B cell (primary cell): ENCODE measurements at regions of chr13 and their contacts with region 1.

Region 1: GRCh38 chr13:40613192-40613818 is 53.1 kb downstream of the FOXO1 start:
- DNase-seq: peak; percentile 78
- ATAC-seq: peak; percentile 83
- H3K4me3 ChIP-seq: peak overlapping the region in 3 of 5 experiments; percentile 3 to 36 (median 25)
- H3K4me3 Mint-ChIP-seq: peak overlapping the region; percentile 71
- H3K27ac ChIP-seq: peak overlapping the region; percentile 55 to 83
- H3K27ac Mint-ChIP-seq: peak overlapping the region; percentile 88
- H3K4me1 ChIP-seq: peaks cover 71 to 89% of the 10 kb centered on the region in 2 donors
- H3K4me1 Mint-ChIP-seq: peaks cover 88% of the 10 kb centered on the region
- H3K27me3 ChIP-seq: no peaks in the 10 kb centered on the region
- H3K27me3 Mint-ChIP-seq: no peaks in the 10 kb centered on the region
- CTCF ChIP-seq: no peak

Region 2: DNA sequence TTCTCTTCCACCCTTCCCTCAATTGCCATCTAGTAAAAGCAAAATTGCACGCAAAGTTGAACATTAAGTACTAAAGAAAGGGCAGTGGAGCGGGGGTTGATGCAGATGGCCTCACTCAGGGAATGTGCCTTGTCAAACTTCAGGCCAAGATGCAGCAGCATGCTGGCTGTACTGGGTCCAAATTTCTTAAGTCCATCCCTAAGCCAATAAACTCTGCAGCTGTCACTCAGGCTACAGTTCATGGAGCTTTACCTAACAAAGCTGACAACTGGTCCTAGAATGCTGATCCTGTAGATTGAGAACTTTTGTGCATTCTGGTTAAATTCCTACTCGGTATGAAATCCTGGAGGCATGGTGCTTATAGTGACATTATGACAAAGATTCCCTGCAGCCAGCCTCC is 35.2 kb before region 1 on chr13:
- CTCF ChIA-PET with region 1: no interaction called
- POLR2A ChIA-PET with region 1: interaction called, 6 read pairs
- intact Hi-C with region 1: loop called (anchors 5 kb)
- DNase-seq: no peak
- ATAC-seq: no peak
- H3K4me3 ChIP-seq: no peak overlapping the region
- H3K4me3 Mint-ChIP-seq: peak overlapping the region; percentile 42
- H3K27ac ChIP-seq: peak overlapping the region; percentile 77 to 83
- H3K27ac Mint-ChIP-seq: peak overlapping the region; percentile 77
- H3K4me1 ChIP-seq: peaks cover 93 to 94% of the 10 kb centered on the region in 2 donors
- H3K4me1 Mint-ChIP-seq: peaks cover 94% of the 10 kb centered on the region
- H3K27me3 ChIP-seq: no peaks in the 10 kb centered on the region
- H3K27me3 Mint-ChIP-seq: no peaks in the 10 kb centered on the region
- CTCF ChIP-seq: no peak

Region 3: GRCh38 chr13:40597740-40598370 is 15.4 kb before region 1 on chr13:
- CTCF ChIA-PET with region 1: no interaction called
- POLR2A ChIA-PET with region 1: no interaction called
- intact Hi-C with region 1: loop called (anchors 2 kb)
- DNase-seq: no peak
- ATAC-seq: no peak
- H3K4me3 ChIP-seq: no peak overlapping the region
- H3K4me3 Mint-ChIP-seq: peak overlapping the region; percentile 32
- H3K27ac ChIP-seq: peak overlapping the region; percentile 42 to 85
- H3K27ac Mint-ChIP-seq: peak overlapping the region; percentile 62
- H3K4me1 ChIP-seq: peaks cover 83 to 94% of the 10 kb centered on the region in 2 donors
- H3K4me1 Mint-ChIP-seq: peaks cover 88% of the 10 kb centered on the region
- H3K27me3 ChIP-seq: no peaks in the 10 kb centered on the region
- H3K27me3 Mint-ChIP-seq: no peaks in the 10 kb centered on the region
- CTCF ChIP-seq: no peak

Region 4: GRCh38 chr13:40629678-40630384 is 16.5 kb after region 1 on chr13:
- CTCF ChIA-PET with region 1: no interaction called
- POLR2A ChIA-PET with region 1: no interaction called
- intact Hi-C with region 1: loop called (anchors 2 kb)
- DNase-seq: peak; percentile 68
- ATAC-seq: peak; percentile 73
- H3K4me3 ChIP-seq: peak overlapping the region in 2 of 5 experiments; percentile 6 to 37
- H3K4me3 Mint-ChIP-seq: peak overlapping the region; percentile 66
- H3K27ac ChIP-seq: peak overlapping the region; percentile 74 to 80
- H3K27ac Mint-ChIP-seq: peak overlapping the region; percentile 80
- H3K4me1 ChIP-seq: peaks cover 69 to 76% of the 10 kb centered on the region in 2 donors
- H3K4me1 Mint-ChIP-seq: peaks cover 80% of the 10 kb centered on the region
- H3K27me3 ChIP-seq: no peaks in the 10 kb centered on the region
- H3K27me3 Mint-ChIP-seq: no peaks in the 10 kb centered on the region
- CTCF ChIP-seq: no peak

Region 5: DNA sequence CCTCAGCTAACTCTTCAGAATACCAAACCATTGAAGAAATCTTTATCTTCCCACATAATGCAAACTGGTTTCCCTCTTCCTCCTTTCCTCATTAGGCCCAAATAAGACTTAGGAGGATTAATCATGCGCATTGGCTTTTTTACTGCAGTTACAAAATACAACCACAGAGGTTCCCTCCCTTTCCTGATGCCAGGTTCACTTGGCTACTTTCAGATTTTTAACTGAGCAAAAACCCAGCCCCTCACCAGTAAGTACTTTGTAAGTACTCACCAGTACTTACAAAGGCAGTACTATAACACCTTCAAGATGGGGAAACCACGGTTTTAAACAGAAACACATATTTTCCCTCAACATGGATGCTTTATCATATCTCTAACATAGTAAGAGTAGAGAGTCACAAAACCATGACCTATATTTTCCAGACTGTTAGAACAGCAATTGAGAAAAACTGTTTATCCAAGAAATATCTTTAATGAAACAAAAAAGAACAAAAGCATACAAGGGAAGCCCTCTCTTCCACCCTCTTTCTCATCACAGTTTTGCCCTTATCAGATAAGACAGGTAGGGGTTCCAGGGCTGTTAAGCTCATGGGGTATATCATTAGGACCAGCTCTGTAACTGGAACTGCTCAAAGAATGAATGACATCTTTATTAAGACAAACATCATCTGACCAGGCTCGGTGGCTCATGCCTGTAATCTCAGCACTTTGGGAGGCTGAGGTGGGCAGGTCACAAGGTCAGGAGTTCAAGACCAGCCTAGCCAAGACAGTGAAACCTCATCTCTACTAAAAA is 40.4 kb after region 1 on chr13:
- CTCF ChIA-PET with region 1: no interaction called
- POLR2A ChIA-PET with region 1: interaction called, 5 read pairs
- intact Hi-C with region 1: loop called (anchors 5 kb)
- DNase-seq: no peak
- ATAC-seq: peak; percentile 11
- H3K4me3 ChIP-seq: peak overlapping the region in 2 of 5 experiments; percentile 51 to 58
- H3K4me3 Mint-ChIP-seq: peak overlapping the region; percentile 86
- H3K27ac ChIP-seq: peak overlapping the region; percentile 62 to 73
- H3K27ac Mint-ChIP-seq: peak overlapping the region; percentile 90
- H3K4me1 ChIP-seq: peaks cover 79 to 87% of the 10 kb centered on the region in 2 donors
- H3K4me1 Mint-ChIP-seq: peaks cover 92% of the 10 kb centered on the region
- H3K27me3 ChIP-seq: no peaks in the 10 kb centered on the region
- H3K27me3 Mint-ChIP-seq: no peaks in the 10 kb centered on the region
- CTCF ChIP-seq: no peak

Region 6: GRCh38 chr13:40749327-40749726 is 136.0 kb after region 1 on chr13:
- CTCF ChIA-PET with region 1: no interaction called
- POLR2A ChIA-PET with region 1: no interaction called
- intact Hi-C with region 1: no loop called
- DNase-seq: no peak
- ATAC-seq: no peak
- H3K4me3 ChIP-seq: no peak overlapping the region
- H3K4me3 Mint-ChIP-seq: no peak overlapping the region
- H3K27ac ChIP-seq: no peak overlapping the region
- H3K27ac Mint-ChIP-seq: no peak overlapping the region
- H3K4me1 ChIP-seq: no peaks in the 10 kb centered on the region
- H3K4me1 Mint-ChIP-seq: no peaks in the 10 kb centered on the region
- H3K27me3 ChIP-seq: no peaks in the 10 kb centered on the region
- H3K27me3 Mint-ChIP-seq: no peaks in the 10 kb centered on the region
- CTCF ChIP-seq: no peak